ENCODE measurements at regions of chr9 and their contacts with region 1.

Region 1: DNA sequence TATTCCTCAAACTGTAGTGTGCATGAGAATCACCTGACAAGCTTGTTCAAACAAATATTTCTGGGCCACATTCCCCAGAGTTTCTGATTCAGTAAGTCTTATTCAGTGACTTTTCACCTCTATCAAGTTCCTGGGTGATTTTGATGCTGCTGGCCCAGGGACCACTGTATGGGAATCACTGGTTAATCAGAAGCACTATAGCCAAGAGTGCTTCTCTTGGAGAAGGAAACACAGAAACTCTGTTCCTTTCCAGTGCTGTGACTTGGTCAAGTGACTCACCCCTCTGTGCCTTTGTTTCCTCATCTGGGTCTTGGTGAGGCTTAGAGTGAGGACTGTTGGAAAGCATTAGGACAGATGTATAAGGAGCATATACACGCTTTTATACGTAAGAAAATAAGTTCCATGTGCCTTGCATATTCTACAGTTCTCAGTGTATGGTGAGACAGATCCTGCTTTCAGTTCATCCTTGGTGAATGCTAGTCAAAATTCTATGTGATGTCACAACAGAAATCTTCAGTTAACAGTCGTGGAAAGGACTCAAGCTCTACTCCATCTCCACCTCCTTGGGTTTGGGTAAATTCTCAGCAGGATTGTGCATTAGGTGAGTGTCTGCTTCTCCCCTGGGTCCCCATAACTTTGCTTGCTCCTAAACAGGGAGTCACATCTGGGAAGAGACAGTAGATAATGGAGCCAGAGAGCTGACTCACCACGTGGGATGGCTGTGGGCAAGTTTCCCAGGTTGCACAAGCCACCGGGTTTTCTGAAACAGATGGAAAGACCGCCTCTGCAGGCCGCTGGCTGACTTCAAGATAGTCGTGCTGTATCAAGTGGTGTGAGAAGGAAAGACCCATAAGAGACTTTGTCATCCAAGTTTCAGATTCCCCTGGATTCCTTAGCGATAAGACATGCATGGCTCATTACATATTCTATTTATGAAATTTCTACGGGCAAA is 117.0 kb downstream of the NXNL2 start:
- DNase-seq: peak; percentile 99
- ATAC-seq: peak; percentile 89
- H3K4me3 ChIP-seq: no peak overlapping the region; the same call in 1 of the 2 replicates
- H3K27ac ChIP-seq: peak overlapping the region; percentile 89
- H3K4me1 ChIP-seq: peaks cover 17% of the 10 kb centered on the region
- H3K27me3 ChIP-seq: no peaks in the 10 kb centered on the region
- CTCF ChIP-seq: peak; percentile 54
- POLR2A ChIP-seq: peak; percentile 51
- RAD21 ChIP-seq: peak; percentile 44

Region 2: DNA sequence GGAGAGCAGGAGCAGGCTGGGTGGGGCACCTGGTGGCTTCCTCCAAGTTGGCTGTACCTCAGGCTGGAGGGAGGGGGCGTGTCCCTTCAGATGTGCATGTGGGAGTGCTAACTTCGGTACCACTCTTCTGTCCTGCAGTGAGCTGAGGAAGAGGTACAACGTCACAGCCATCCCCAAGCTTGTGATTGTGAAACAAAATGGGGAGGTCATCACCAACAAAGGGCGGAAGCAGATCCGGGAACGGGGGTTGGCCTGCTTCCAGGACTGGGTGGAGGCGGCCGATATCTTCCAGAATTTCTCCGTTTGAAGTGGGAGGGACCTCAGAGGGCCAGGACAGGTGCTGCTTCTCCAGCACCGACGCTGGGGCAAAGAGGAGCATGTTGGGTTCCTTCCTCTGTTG is 107.7 kb before region 1 on chr9:
- CTCF ChIA-PET with region 1: no interaction called
- POLR2A ChIA-PET with region 1: interaction called, 10 read pairs
- dilution Hi-C with region 1: no loop called
- in situ Hi-C with region 1: no loop called
- intact Hi-C with region 1: no loop called
- DNase-seq: no peak
- ATAC-seq: no peak
- H3K4me3 ChIP-seq: no peak overlapping the region
- H3K27ac ChIP-seq: no peak overlapping the region
- H3K4me1 ChIP-seq: no peaks in the 10 kb centered on the region
- H3K27me3 ChIP-seq: no peaks in the 10 kb centered on the region
- CTCF ChIP-seq: no peak
- POLR2A ChIP-seq: no peak
- RAD21 ChIP-seq: no peak

Region 3: GRCh38 chr9:88741335-88741734 is 89.4 kb after region 1 on chr9:
- CTCF ChIA-PET with region 1: no interaction called
- POLR2A ChIA-PET with region 1: no interaction called
- dilution Hi-C with region 1: no loop called
- in situ Hi-C with region 1: no loop called
- intact Hi-C with region 1: loop called (anchors 5 kb)
- DNase-seq: no peak
- ATAC-seq: no peak
- H3K4me3 ChIP-seq: no peak overlapping the region
- H3K27ac ChIP-seq: no peak overlapping the region
- H3K4me1 ChIP-seq: peaks cover 19% of the 10 kb centered on the region
- H3K27me3 ChIP-seq: no peaks in the 10 kb centered on the region
- CTCF ChIP-seq: peak; percentile 34; the same call in 1 of the 2 replicates
- POLR2A ChIP-seq: no peak
- RAD21 ChIP-seq: peak; percentile 43; the same call in 1 of the 2 replicates

Region 4: DNA sequence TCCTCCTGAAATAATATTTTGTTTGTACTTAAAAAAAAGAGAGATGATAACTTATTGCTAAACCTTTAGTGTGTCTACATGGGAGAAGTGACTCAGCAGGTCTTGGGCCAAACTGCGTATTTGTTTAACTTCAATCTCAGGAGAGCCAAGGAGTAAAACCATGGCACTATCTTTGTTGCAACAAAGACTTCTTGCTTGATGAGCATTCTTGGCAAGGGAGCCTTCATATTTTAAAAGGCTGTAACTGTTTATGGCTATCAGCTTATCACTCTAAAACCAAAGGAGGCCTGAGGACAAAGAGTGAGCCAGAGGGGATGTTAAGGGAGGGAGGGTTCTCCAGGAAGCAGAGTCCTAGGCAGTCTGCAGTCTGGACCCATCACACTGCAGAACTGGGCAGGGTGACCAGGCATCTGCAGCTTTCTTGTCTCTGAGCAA is 123.1 kb after region 1 on chr9:
- CTCF ChIA-PET with region 1: no interaction called
- POLR2A ChIA-PET with region 1: no interaction called
- dilution Hi-C with region 1: no loop called
- in situ Hi-C with region 1: no loop called
- intact Hi-C with region 1: loop called (anchors 2 kb)
- DNase-seq: peak; percentile 98
- ATAC-seq: peak; percentile 76
- H3K4me3 ChIP-seq: no peak overlapping the region
- H3K27ac ChIP-seq: peak overlapping the region; percentile 82
- H3K4me1 ChIP-seq: peaks cover 36% of the 10 kb centered on the region
- H3K27me3 ChIP-seq: no peaks in the 10 kb centered on the region
- CTCF ChIP-seq: no peak
- POLR2A ChIP-seq: no peak
- RAD21 ChIP-seq: no peak